Activated CD8-positive, alpha-beta T cell treated with anti-CD3 and anti-CD28 coated beads for 36 hours (primary cell): ENCODE measurements at regions of chr15 and their contacts with region 1.

Region 1: GRCh38 chr15:64046347-64047153 is at the start of gene DAPK2:
- DNase-seq: peak; percentile 60
- ATAC-seq: peak; percentile 89
- H3K4me3 Mint-ChIP-seq: peak within 1 kb of the TSS; percentile 66
- H3K27ac Mint-ChIP-seq: peak within 1 kb of the TSS; percentile 8
- H3K4me1 Mint-ChIP-seq: peaks cover 7% of the 10 kb centered on the region
- H3K27me3 Mint-ChIP-seq: peaks cover 11% of the 10 kb centered on the region
- CTCF ChIP-seq: peak; percentile 81
- total RNA-seq, gene DAPK2: 1.2 to 1.5 TPM

Region 2: GRCh38 chr15:63729115-63729884 is 317.2 kb before region 1 on chr15:
- CTCF ChIA-PET with region 1: interaction called, 11 read pairs
- POLR2A ChIA-PET with region 1: no interaction called
- intact Hi-C with region 1: no loop called
- DNase-seq: peak; percentile 37
- ATAC-seq: peak; percentile 39
- H3K4me3 Mint-ChIP-seq: no peak overlapping the region
- H3K27ac Mint-ChIP-seq: no peak overlapping the region
- H3K4me1 Mint-ChIP-seq: peaks cover 16% of the 10 kb centered on the region
- H3K27me3 Mint-ChIP-seq: no peaks in the 10 kb centered on the region
- CTCF ChIP-seq: no peak

Region 3: GRCh38 chr15:63891079-63891767 is 155.3 kb before region 1 on chr15:
- CTCF ChIA-PET with region 1: interaction called, 15 read pairs
- POLR2A ChIA-PET with region 1: no interaction called
- intact Hi-C with region 1: no loop called
- DNase-seq: peak; percentile 88
- ATAC-seq: peak; percentile 19
- H3K4me3 Mint-ChIP-seq: no peak overlapping the region
- H3K27ac Mint-ChIP-seq: no peak overlapping the region
- H3K4me1 Mint-ChIP-seq: peaks cover 62% of the 10 kb centered on the region
- H3K27me3 Mint-ChIP-seq: no peaks in the 10 kb centered on the region
- CTCF ChIP-seq: peak; percentile 85

Region 4: GRCh38 chr15:63970621-63971426 is 75.7 kb before region 1 on chr15:
- CTCF ChIA-PET with region 1: interaction called, 10 read pairs
- POLR2A ChIA-PET with region 1: no interaction called
- intact Hi-C with region 1: no loop called
- DNase-seq: peak; percentile 65
- ATAC-seq: peak; percentile 83
- H3K4me3 Mint-ChIP-seq: peak overlapping the region; percentile 11
- H3K27ac Mint-ChIP-seq: peak overlapping the region; percentile 89
- H3K4me1 Mint-ChIP-seq: peaks cover 41% of the 10 kb centered on the region
- H3K27me3 Mint-ChIP-seq: no peaks in the 10 kb centered on the region
- CTCF ChIP-seq: no peak

Region 5: DNA sequence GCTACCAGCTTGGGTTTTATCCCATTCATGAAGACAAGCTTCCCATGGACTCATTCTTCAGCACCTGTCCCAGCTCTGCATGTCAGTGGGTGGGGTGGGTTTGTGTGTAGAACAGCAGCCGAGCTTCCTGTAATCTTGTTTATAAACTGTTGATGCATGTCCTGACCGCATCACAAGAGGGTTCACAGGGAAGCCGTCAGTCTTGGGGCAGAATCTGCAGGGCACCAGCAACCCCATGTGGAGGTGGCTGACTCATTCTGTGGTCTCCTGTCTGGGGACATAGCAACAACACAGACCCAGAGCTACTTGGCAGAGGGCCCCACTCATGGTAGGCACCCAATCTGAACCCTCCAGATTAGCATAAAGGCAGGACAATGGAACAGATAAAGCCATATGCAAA is 35.8 kb before region 1 on chr15:
- CTCF ChIA-PET with region 1: interaction called, 14 read pairs
- POLR2A ChIA-PET with region 1: interaction called, 3 read pairs
- intact Hi-C with region 1: no loop called
- DNase-seq: peak; percentile 95
- ATAC-seq: peak; percentile 88
- H3K4me3 Mint-ChIP-seq: peak overlapping the region; percentile 22
- H3K27ac Mint-ChIP-seq: peak overlapping the region; percentile 88
- H3K4me1 Mint-ChIP-seq: peaks cover 37% of the 10 kb centered on the region
- H3K27me3 Mint-ChIP-seq: no peaks in the 10 kb centered on the region
- CTCF ChIP-seq: no peak

Region 6: GRCh38 chr15:64067564-64068030 is 21.0 kb after region 1 on chr15:
- CTCF ChIA-PET with region 1: interaction called, 23 read pairs
- POLR2A ChIA-PET with region 1: no interaction called
- intact Hi-C with region 1: no loop called
- DNase-seq: peak; percentile 80
- ATAC-seq: peak; percentile 89
- H3K4me3 Mint-ChIP-seq: no peak overlapping the region
- H3K27ac Mint-ChIP-seq: no peak overlapping the region
- H3K4me1 Mint-ChIP-seq: peaks cover 4% of the 10 kb centered on the region
- H3K27me3 Mint-ChIP-seq: no peaks in the 10 kb centered on the region
- CTCF ChIP-seq: peak; percentile 81